ENCODE measurements at regions of chr11 and their contacts with region 1.

Region 1: GRCh38 chr11:1389103-1389931 is 417 bp upstream of the BRSK2 start:
- DNase-seq: peak; percentile 92
- H3K4me3 Mint-ChIP-seq: peak overlapping the region; percentile 51
- H3K27ac Mint-ChIP-seq: peak overlapping the region; percentile 33
- H3K4me1 Mint-ChIP-seq: peaks cover 8% of the 10 kb centered on the region
- H3K27me3 Mint-ChIP-seq: peaks cover 33% of the 10 kb centered on the region

Region 2: DNA sequence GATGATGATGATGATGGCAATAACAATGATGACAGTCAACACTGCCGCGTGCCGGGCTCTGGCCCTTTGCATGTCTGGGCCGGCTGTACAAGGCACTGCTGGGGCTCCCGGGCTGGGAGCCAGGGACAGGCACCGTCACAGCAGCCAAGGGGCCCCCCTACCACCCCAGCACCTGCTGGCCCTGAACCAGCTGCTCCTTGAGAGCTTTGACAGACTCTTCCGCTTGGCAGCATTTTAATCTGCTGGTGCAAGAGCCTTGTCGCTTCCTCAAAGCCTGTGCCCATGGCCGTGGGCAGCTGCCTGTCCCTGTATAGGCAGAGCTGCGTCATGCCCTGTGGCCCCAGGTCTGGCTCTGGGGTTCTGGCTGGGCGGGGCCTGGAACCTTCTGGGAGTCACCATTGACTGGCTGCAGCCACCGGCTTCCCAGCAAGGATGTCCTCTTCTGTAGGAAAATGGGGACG is 339.9 kb before region 1 on chr11:
- intact Hi-C with region 1: no loop called
- DNase-seq: no peak
- H3K4me3 Mint-ChIP-seq: no peak overlapping the region
- H3K27ac Mint-ChIP-seq: no peak overlapping the region
- H3K4me1 Mint-ChIP-seq: no peaks in the 10 kb centered on the region
- H3K27me3 Mint-ChIP-seq: peaks cover 8% of the 10 kb centered on the region

Region 3: DNA sequence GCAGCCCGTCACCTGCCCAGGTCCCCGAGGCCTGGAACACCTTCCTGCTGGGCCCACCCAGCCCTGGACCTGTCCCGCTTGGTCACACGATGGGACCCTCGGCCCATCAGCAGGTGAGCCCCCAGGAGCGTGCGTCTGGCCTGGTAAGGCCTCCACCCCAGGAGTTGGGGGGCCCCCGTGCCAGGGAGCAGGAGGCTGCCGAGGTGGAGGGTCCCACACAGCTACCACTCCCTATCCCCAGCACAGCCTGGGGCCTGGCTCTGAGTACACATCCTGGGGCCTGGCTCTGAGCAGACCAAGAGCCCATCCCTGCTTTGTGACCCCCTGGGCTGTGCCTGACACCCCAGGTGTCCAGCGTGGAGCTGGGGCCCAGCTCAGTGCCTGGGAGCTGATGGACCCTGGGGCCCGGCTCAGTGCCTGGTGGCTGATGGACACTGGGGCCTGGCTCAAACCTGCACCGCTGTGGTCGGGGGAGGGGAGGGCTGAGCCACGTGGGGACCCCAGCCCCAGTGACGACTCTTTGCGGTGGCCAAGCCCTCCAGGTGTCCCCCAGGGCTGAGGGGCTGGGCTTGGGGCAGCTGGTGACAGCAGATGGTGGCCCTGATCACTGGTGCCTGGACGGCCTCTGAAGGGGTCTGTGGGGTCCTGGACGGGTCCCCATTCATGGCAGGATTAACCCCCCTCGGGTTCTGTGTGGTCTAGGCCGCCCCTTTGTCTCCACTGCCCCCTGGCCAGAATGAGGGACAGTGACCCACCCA is 170.1 kb before region 1 on chr11:
- intact Hi-C with region 1: no loop called
- DNase-seq: no peak
- H3K4me3 Mint-ChIP-seq: no peak overlapping the region
- H3K27ac Mint-ChIP-seq: no peak overlapping the region
- H3K4me1 Mint-ChIP-seq: no peaks in the 10 kb centered on the region
- H3K27me3 Mint-ChIP-seq: no peaks in the 10 kb centered on the region

Region 4: DNA sequence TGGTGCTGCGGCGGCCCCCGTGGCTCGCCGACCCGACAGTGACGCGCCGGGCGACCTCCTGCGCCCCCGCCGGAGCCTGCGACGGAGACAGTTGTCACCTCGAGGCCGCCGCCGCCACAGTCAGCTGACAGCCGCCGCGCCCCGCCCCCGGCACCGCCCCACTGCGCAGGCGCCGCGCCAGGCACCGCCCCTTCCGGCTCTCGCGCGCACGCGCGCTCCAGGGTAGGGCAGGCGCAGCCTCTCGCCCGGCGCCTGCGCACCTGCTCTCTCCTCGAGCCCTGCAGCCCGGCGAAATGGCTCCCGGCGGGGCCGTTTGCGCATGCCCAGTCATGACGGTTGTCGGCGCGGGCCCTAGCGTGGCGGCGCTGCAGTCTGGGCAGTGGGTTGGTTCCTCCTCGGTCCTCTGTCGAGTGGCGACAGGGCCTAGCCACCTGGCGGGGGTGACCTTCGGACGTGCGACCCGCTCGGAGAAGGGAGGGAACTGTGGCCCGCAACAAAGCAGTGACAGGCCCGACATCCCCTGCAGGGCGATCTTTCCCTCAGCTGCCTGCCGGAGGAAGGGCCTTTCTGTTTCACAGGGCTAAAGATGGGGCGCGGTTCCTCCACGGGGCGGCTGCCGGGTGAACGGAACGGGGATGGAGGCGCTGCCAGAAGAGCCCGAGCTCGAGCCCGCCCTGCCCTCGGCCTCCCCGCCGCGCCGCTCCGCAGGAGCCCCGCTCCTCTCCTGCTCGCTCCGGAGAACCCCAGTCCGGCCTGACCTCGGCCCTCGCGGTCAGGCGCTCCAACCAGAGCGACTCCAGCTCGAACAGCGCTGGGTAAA is 79.6 kb before region 1 on chr11 and contains the start of gene TOLLIP:
- intact Hi-C with region 1: loop called (anchors 5 kb)
- DNase-seq: peak; percentile 96
- H3K4me3 Mint-ChIP-seq: peak within 1 kb of the TSS; percentile 78
- H3K27ac Mint-ChIP-seq: peak within 1 kb of the TSS; percentile 88
- H3K4me1 Mint-ChIP-seq: peaks cover 25% of the 10 kb centered on the region
- H3K27me3 Mint-ChIP-seq: peaks cover 19% of the 10 kb centered on the region
- total RNA-seq, gene TOLLIP: 33.6 and 35.0 TPM in 2 replicates

Region 5: DNA sequence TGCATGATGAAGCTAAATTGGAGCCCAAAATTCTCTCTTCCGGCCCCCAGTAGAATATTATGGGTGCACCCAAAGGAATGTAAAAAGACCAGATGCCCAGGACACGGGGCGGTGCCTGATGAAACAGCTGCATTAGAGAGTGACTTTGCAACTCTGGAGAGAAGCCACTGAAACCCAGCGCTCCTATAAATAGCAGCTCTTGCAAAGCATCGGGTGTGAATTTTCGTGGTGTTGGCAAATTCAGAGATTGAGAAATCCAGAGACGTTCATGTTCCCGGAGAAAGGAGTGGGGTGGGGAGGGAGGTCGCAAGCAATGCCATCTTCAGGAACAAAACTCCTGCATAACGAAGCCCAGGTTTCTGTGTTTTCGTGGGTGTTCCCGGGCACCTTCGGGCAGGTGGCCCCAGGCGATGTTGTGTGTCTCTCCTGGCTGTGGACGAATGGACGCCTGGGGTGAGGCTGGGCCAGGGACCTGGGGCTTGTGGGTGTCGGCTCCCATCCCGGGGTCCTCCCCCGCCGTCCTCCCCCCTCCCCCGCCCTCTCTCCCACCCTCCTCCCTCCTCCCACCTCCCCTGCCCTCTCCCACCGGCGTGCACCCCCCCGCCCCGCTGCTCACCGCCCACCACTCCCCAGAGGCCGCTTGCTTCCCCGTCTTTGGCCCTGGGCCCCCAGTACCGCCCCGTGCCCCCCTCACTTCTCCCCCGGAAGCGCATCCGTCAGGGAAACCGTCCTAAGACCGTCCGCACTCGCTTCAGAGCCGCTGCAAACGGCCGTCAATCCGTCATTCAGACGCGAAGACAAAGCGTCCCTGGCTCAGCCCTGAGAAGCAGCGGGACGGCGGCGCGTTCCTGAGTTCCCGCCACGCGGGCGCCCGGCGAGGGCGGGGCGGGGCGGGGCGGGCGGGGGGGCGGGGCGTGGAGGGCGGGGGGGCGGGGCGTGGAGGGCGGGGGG is 53.2 kb before region 1 on chr11:
- intact Hi-C with region 1: loop called (anchors 10 kb)
- DNase-seq: peak; percentile 33
- H3K4me3 Mint-ChIP-seq: peak overlapping the region; percentile 69
- H3K27ac Mint-ChIP-seq: no peak overlapping the region
- H3K4me1 Mint-ChIP-seq: peaks cover 10% of the 10 kb centered on the region
- H3K27me3 Mint-ChIP-seq: peaks cover 12% of the 10 kb centered on the region

Region 6: DNA sequence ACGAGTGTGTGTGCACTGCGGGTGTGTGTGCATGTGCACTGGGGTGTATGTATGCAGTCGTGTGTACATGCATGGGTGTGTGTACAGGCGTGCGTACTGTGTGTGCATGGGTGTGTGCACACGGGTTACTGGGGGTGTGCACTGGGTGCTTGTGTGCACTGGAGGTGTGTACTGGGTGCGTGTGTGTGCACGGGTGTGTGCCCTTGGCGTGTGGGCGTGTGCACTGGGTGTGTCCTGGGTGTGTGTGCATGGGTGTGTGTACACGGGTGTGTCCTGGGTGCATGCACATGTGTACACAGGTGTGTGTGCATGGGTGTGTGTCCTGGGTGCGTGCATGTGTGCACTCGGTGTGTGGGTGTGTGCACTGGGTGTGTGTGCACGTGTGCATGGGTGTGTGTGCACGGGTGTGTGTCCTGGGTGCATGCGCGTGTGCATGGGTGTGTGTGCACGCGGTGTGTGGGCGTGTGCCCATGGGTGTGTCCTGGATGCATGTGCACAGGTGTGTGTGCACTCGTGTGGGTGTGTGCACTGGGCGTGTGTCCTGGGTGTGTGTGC is 39.5 kb after region 1 on chr11:
- intact Hi-C with region 1: no loop called
- DNase-seq: no peak
- H3K4me3 Mint-ChIP-seq: no peak overlapping the region
- H3K27ac Mint-ChIP-seq: no peak overlapping the region
- H3K4me1 Mint-ChIP-seq: no peaks in the 10 kb centered on the region
- H3K27me3 Mint-ChIP-seq: no peaks in the 10 kb centered on the region

Measured in activated T-helper 2 cell treated with anti-CD3 and anti-CD28 coated beads, Interferon-gamma antibody, Interleukin-2, Interleukin-4, amounts not matched to agents 10 μg/mL and 5 μg/mL and 100 μg/mL, durations not matched to agents 14 hours and 24 hours and 36 hours (primary cell).